Activated B cell treated with CpG ODN at 0.5 μM for 24 hours (primary cell): ENCODE measurements at regions of chr22 and their contacts with region 1.

Region 1: GRCh38 chr22:22959147-22959827 is 71.7 kb downstream of the IGLL5 start:
- DNase-seq: no peak
- ATAC-seq: peak; percentile 63
- H3K4me3 Mint-ChIP-seq: no peak overlapping the region
- H3K27ac Mint-ChIP-seq: no peak overlapping the region
- H3K4me1 Mint-ChIP-seq: peaks cover 15% of the 10 kb centered on the region
- H3K27me3 Mint-ChIP-seq: no peaks in the 10 kb centered on the region
- CTCF ChIP-seq: peak; percentile 94

Region 2: GRCh38 chr22:22207845-22208564 is 751.3 kb before region 1 on chr22:
- CTCF ChIA-PET with region 1: interaction called, 8 read pairs
- POLR2A ChIA-PET with region 1: interaction called, 3 read pairs
- intact Hi-C with region 1: loop called (anchors 2 kb)
- DNase-seq: peak; percentile 80
- ATAC-seq: peak; percentile 83
- H3K4me3 Mint-ChIP-seq: peak overlapping the region; percentile 70
- H3K27ac Mint-ChIP-seq: peak overlapping the region; percentile 90
- H3K4me1 Mint-ChIP-seq: peaks cover 56% of the 10 kb centered on the region
- H3K27me3 Mint-ChIP-seq: no peaks in the 10 kb centered on the region
- CTCF ChIP-seq: no peak

Region 3: DNA sequence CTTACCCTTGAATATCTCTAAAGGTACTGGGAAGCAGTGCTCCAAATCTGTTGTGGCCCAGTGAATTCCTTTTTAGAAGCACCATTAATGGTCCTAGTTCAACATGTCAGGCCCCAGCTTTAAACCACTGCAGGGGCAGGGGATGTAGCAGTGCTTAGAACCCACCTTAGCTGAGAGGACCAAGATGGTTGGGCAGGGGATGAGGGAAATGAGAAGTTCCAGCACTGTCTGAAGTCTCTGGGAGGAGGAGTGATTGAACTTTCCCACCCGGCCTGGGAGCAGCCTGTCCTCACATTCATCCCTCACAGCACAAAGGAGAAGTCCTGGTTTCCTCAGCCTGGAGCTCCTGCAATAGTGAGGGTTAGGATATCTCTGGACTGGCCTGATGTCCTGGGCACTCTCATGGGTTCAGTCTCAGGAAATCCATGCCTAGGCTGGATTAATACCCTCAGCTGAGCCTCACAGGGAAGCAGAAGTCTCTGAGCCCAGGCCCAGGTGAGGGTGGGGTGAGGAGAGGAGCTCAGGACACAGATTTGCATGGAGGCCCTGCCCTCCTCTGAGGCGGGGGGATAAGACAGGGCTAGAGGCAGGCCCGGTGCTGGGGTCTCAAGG is 371.6 kb before region 1 on chr22:
- CTCF ChIA-PET with region 1: interaction called, 9 read pairs
- POLR2A ChIA-PET with region 1: interaction called, 3 read pairs
- intact Hi-C with region 1: loop called (anchors 2 kb)
- DNase-seq: no peak
- ATAC-seq: no peak
- H3K4me3 Mint-ChIP-seq: no peak overlapping the region
- H3K27ac Mint-ChIP-seq: no peak overlapping the region
- H3K4me1 Mint-ChIP-seq: peaks cover 42% of the 10 kb centered on the region
- H3K27me3 Mint-ChIP-seq: no peaks in the 10 kb centered on the region
- CTCF ChIP-seq: no peak

Region 4: DNA sequence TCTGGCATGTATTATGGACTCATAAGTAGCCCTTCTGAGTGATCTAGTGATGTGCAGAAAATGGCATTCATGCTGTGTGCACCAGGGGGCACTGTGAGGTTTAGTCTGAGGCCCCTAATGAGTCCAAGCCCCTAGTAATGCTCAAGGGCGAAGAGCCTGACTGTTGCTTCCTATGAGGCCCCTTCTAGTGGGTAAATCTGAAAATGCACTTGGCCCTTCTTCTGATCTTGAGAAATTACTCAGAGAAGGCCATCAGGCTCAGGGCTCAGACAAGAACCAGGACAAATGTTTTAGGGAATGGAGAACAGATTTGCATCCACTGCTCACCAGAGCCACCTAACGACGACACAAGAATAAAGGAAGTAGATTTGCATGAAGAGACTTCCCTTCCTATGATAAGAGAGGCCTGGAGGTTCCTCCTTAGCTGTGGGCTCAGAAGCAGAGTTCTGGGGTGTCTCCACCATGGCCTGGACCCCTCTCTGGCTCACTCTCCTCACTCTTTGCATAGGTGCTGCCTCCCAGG is 239.0 kb before region 1 on chr22:
- CTCF ChIA-PET with region 1: interaction called, 13 read pairs
- POLR2A ChIA-PET with region 1: no interaction called
- intact Hi-C with region 1: loop called (anchors 1 kb)
- DNase-seq: peak; percentile 41
- ATAC-seq: peak; percentile 68
- H3K4me3 Mint-ChIP-seq: peak overlapping the region; percentile 68
- H3K27ac Mint-ChIP-seq: peak overlapping the region; percentile 94
- H3K4me1 Mint-ChIP-seq: peaks cover 58% of the 10 kb centered on the region
- H3K27me3 Mint-ChIP-seq: no peaks in the 10 kb centered on the region
- CTCF ChIP-seq: no peak

Region 5: DNA sequence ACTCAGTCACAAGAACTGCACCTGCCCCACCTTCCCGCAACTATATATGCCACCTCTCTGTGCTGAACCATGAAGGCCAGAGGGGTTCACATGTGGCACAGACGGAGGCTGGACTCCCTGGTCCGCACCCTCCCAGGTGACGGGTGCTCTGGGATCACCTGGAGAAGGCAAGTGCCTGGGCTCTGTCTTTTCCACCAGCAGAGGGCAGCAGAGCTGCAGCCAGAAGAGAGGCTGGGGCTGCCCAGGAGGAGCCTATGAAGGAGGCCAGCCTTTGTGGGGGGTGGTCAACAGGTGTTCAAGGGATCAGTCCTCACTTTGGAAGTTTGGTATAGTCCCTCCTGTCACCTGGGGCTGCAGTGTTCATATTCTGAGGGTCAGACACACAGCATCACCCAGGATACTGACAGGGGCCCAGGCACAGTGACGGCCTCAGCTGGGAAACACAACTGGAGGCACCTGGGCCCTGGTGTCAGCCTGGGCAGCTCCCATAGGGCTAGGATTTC is 110.9 kb before region 1 on chr22:
- CTCF ChIA-PET with region 1: interaction called, 182 read pairs
- POLR2A ChIA-PET with region 1: interaction called, 9 read pairs
- intact Hi-C with region 1: loop called (anchors 1 kb)
- DNase-seq: peak; percentile 62
- ATAC-seq: peak; percentile 67
- H3K4me3 Mint-ChIP-seq: no peak overlapping the region
- H3K27ac Mint-ChIP-seq: no peak overlapping the region
- H3K4me1 Mint-ChIP-seq: peaks cover 39% of the 10 kb centered on the region
- H3K27me3 Mint-ChIP-seq: peaks cover 10% of the 10 kb centered on the region
- CTCF ChIP-seq: peak; percentile 79

Region 6: DNA sequence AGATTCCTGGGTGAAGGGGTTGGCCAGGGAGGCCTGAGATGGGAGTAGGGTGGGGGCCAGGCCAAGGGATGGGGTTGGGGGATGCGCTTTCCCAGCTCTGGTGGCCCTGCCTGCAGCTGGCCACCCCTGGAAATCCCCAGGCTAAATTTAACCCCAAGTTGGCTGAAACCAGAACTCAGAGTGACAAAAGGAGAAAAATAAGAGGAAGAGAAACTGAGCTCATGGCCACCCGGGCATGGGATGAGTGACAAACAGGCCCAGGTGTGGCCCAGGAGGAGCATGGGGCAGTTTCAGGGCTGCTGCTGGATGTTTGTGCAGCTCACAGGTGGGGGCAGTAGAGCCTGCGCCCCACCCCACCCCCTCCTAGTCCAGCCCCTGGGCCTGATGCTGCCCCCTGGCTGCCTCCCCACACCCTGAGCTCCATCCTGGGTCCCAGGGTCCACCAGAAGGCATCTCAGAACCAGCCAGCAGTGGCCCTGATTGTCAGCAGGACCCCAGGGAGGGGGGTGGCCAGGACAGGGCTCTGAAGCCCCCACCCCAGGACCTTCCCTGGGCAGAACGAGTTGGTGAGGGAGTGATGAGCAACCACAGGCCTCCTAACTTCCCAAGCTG is 23.6 kb before region 1 on chr22:
- CTCF ChIA-PET with region 1: interaction called, 75 read pairs
- POLR2A ChIA-PET with region 1: interaction called, 38 read pairs
- intact Hi-C with region 1: loop called (anchors 2 kb)
- DNase-seq: peak; percentile 77
- ATAC-seq: peak; percentile 87
- H3K4me3 Mint-ChIP-seq: peak overlapping the region; percentile 59
- H3K27ac Mint-ChIP-seq: peak overlapping the region; percentile 96
- H3K4me1 Mint-ChIP-seq: peaks cover 98% of the 10 kb centered on the region
- H3K27me3 Mint-ChIP-seq: no peaks in the 10 kb centered on the region
- CTCF ChIP-seq: no peak

Region 7: GRCh38 chr22:22993184-22993583 is 33.9 kb after region 1 on chr22:
- CTCF ChIA-PET with region 1: no interaction called
- POLR2A ChIA-PET with region 1: no interaction called
- intact Hi-C with region 1: no loop called
- DNase-seq: no peak
- ATAC-seq: no peak
- H3K4me3 Mint-ChIP-seq: no peak overlapping the region
- H3K27ac Mint-ChIP-seq: no peak overlapping the region
- H3K4me1 Mint-ChIP-seq: no peaks in the 10 kb centered on the region
- H3K27me3 Mint-ChIP-seq: peaks cover 7% of the 10 kb centered on the region
- CTCF ChIP-seq: no peak

Region 8: GRCh38 chr22:23178512-23179254 is 219.4 kb after region 1 on chr22:
- CTCF ChIA-PET with region 1: interaction called, 55 read pairs
- POLR2A ChIA-PET with region 1: no interaction called
- intact Hi-C with region 1: loop called (anchors 1 kb)
- DNase-seq: peak; percentile 56
- ATAC-seq: peak; percentile 28
- H3K4me3 Mint-ChIP-seq: peak overlapping the region; percentile 46
- H3K27ac Mint-ChIP-seq: peak overlapping the region; percentile 19
- H3K4me1 Mint-ChIP-seq: peaks cover 51% of the 10 kb centered on the region
- H3K27me3 Mint-ChIP-seq: peaks cover 3% of the 10 kb centered on the region
- CTCF ChIP-seq: peak; percentile 87

Region 9: GRCh38 chr22:24445481-24446259 is 1486.4 kb after region 1 on chr22:
- CTCF ChIA-PET with region 1: no interaction called
- POLR2A ChIA-PET with region 1: no interaction called
- intact Hi-C with region 1: no loop called
- DNase-seq: no peak
- ATAC-seq: peak; percentile 84
- H3K4me3 Mint-ChIP-seq: no peak overlapping the region
- H3K27ac Mint-ChIP-seq: no peak overlapping the region
- H3K4me1 Mint-ChIP-seq: peaks cover 41% of the 10 kb centered on the region
- H3K27me3 Mint-ChIP-seq: no peaks in the 10 kb centered on the region
- CTCF ChIP-seq: no peak